GM10248 (cell line): ENCODE measurements at regions of chr7 and their contacts with region 1.

Region 1: DNA sequence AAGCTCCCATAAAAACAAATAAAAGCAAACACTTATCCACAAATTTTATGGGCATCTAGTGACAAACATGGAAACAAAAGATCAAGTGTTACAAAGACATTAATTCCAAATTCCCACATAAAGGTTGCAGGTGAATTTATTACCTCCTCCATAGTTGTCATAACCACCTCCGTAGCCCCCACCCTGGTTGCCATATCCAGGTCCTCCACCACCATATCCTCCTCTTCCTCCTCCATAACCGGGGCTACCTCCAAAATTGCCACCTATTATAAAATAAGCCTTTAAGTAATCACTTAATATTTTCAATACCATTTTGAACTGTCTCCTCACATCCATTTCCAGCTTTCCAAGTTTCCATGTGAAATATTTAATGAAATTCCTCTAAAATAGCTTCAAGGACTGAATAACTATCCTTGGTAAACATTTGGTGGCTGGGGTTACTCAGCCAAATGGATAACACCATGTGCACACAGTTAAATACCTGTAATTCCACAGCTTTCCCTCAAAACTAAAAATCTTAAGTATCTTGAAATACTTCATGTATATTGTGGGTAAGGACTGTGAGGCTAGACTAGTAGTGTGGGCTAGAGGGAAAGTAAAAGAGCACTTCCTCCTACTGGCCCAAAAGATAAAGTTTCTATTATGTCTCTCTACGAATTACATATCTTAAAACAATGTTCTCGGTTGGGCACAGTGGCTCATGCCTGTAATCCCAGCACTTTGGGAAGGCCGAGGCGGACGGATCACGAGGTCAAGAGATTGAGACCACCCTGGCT is 6.9 kb downstream of the HNRNPA2B1 start:
- DNase-seq: no peak
- CTCF ChIP-seq: no peak

Region 2: GRCh38 chr7:26151953-26152781 is 41.5 kb before region 1 on chr7 and contains the start of gene NFE2L3:
- CTCF ChIA-PET with region 1: interaction called, 11 read pairs
- POLR2A ChIA-PET with region 1: interaction called, 7 read pairs
- DNase-seq: peak; percentile 94
- CTCF ChIP-seq: peak; percentile 13

Region 3: DNA sequence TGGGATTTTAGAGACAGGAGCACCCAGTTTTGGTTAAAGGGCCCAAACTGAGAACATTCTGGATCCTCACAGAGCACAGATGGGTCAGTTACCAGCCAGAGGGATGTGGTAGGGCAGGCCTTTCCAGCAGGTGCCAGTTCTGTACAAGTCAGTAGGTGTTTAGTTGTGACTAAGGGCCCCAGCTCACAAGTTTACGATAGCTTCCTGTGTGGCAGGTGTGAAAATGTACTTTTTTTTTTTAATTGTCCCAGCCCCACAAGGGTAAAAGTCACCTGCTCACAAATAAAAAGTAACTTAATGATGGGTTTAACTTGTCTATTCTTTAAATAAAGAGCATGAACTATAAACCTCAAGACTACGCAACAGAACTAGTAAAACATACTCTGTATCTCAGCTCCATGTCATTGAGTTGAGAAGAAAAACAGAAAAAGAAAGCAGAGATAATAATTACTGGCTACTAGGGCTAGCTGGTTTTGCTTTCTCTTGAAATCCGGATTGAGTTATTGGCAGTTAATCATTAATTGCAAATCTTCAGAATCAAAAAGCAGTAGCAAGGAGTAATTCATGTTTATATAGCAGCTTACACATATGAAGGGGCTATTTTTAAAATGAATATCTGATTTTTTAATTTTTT is 26.2 kb before region 1 on chr7:
- CTCF ChIA-PET with region 1: interaction called, 9 read pairs
- POLR2A ChIA-PET with region 1: interaction called, 11 read pairs
- DNase-seq: peak; percentile 44
- CTCF ChIP-seq: no peak